ENCODE measurements at regions of chr12 and their contacts with region 1.

Region 1: DNA sequence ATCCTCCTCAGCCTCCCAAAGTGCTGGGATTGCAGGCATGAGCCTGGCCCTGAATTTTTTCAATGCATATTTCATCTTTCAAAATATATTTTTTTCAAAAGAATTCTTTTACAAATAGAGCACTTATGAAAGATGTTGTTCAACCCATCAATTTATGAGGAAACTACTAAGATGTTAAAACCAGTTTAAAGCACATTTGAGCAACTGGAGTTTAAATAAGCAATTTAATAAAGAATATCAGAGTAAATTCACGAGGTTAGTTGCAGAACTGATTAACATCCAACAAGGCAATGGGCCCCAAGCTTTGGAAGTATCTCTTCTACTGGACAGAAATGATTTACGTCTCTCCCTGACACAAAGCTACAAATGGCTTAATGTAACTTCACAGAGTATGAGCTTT is 23.3 kb downstream of the GLT1D1 start:
- DNase-seq: no peak
- ATAC-seq: no peak
- H3K4me3 Mint-ChIP-seq: no peak overlapping the region
- H3K27ac Mint-ChIP-seq: no peak overlapping the region
- H3K4me1 Mint-ChIP-seq: no peaks in the 10 kb centered on the region
- H3K27me3 Mint-ChIP-seq: no peaks in the 10 kb centered on the region
- CTCF ChIP-seq: no peak

Region 2: GRCh38 chr12:128844031-128844635 is 32.4 kb before region 1 on chr12:
- CTCF ChIA-PET with region 1: no interaction called
- POLR2A ChIA-PET with region 1: no interaction called
- intact Hi-C with region 1: loop called (anchors 1 kb)
- DNase-seq: no peak
- ATAC-seq: peak; percentile 43
- H3K4me3 Mint-ChIP-seq: no peak overlapping the region
- H3K27ac Mint-ChIP-seq: no peak overlapping the region
- H3K4me1 Mint-ChIP-seq: peaks cover 24% of the 10 kb centered on the region
- H3K27me3 Mint-ChIP-seq: no peaks in the 10 kb centered on the region
- CTCF ChIP-seq: no peak

Region 3: GRCh38 chr12:128891856-128892255 is 15.3 kb after region 1 on chr12:
- CTCF ChIA-PET with region 1: no interaction called
- POLR2A ChIA-PET with region 1: no interaction called
- intact Hi-C with region 1: no loop called
- DNase-seq: no peak
- ATAC-seq: no peak
- H3K4me3 Mint-ChIP-seq: no peak overlapping the region
- H3K27ac Mint-ChIP-seq: no peak overlapping the region
- H3K4me1 Mint-ChIP-seq: no peaks in the 10 kb centered on the region
- H3K27me3 Mint-ChIP-seq: peaks cover 5% of the 10 kb centered on the region
- CTCF ChIP-seq: no peak